B cell (primary cell): ENCODE measurements at regions of chr6 and their contacts with region 1.

Region 1: GRCh38 chr6:150685860-150686259 is 86.2 kb downstream of the PLEKHG1 start:
- DNase-seq: peak; percentile 73
- ATAC-seq: peak; percentile 44
- H3K4me3 ChIP-seq: no peak overlapping the region
- H3K4me3 Mint-ChIP-seq: no peak overlapping the region
- H3K27ac ChIP-seq: peak overlapping the region; percentile 72 to 96
- H3K27ac Mint-ChIP-seq: peak overlapping the region; percentile 46
- H3K4me1 ChIP-seq: peaks cover 89 to 98% of the 10 kb centered on the region in 2 donors
- H3K4me1 Mint-ChIP-seq: peaks cover 93% of the 10 kb centered on the region
- H3K27me3 ChIP-seq: no peaks in the 10 kb centered on the region
- H3K27me3 Mint-ChIP-seq: no peaks in the 10 kb centered on the region
- CTCF ChIP-seq: peak; percentile 75

Region 2: GRCh38 chr6:150037526-150038201 is 648.2 kb before region 1 on chr6:
- CTCF ChIA-PET with region 1: no interaction called
- POLR2A ChIA-PET with region 1: no interaction called
- intact Hi-C with region 1: no loop called
- DNase-seq: peak; percentile 30
- ATAC-seq: no peak
- H3K4me3 ChIP-seq: peak overlapping the region in 3 of 5 experiments; percentile 14 to 40 (median 35)
- H3K4me3 Mint-ChIP-seq: peak overlapping the region; percentile 78
- H3K27ac ChIP-seq: no peak overlapping the region
- H3K27ac Mint-ChIP-seq: peak overlapping the region; percentile 1
- H3K4me1 ChIP-seq: peaks cover 18% of the 10 kb centered on the region in 2 donors
- H3K4me1 Mint-ChIP-seq: peaks cover 12% of the 10 kb centered on the region
- H3K27me3 ChIP-seq: peaks cover 0 to 65% (median 41%) of the 10 kb centered on the region in 4 experiments
- H3K27me3 Mint-ChIP-seq: peaks cover 85% of the 10 kb centered on the region
- CTCF ChIP-seq: no peak

Region 3: GRCh38 chr6:150622941-150623874 is 62.7 kb before region 1 on chr6:
- CTCF ChIA-PET with region 1: interaction called, 3 read pairs
- POLR2A ChIA-PET with region 1: no interaction called
- intact Hi-C with region 1: loop called (anchors 2 kb)
- DNase-seq: peak; percentile 95
- ATAC-seq: peak; percentile 85
- H3K4me3 ChIP-seq: peak overlapping the region in 2 of 5 experiments; percentile 18 to 37
- H3K4me3 Mint-ChIP-seq: peak overlapping the region; percentile 9
- H3K27ac ChIP-seq: peak overlapping the region; percentile 96
- H3K27ac Mint-ChIP-seq: peak overlapping the region; percentile 94
- H3K4me1 ChIP-seq: peaks cover 93 to 94% of the 10 kb centered on the region in 2 donors
- H3K4me1 Mint-ChIP-seq: peaks cover 90% of the 10 kb centered on the region
- H3K27me3 ChIP-seq: no peaks in the 10 kb centered on the region
- H3K27me3 Mint-ChIP-seq: no peaks in the 10 kb centered on the region
- CTCF ChIP-seq: no peak

Region 4: DNA sequence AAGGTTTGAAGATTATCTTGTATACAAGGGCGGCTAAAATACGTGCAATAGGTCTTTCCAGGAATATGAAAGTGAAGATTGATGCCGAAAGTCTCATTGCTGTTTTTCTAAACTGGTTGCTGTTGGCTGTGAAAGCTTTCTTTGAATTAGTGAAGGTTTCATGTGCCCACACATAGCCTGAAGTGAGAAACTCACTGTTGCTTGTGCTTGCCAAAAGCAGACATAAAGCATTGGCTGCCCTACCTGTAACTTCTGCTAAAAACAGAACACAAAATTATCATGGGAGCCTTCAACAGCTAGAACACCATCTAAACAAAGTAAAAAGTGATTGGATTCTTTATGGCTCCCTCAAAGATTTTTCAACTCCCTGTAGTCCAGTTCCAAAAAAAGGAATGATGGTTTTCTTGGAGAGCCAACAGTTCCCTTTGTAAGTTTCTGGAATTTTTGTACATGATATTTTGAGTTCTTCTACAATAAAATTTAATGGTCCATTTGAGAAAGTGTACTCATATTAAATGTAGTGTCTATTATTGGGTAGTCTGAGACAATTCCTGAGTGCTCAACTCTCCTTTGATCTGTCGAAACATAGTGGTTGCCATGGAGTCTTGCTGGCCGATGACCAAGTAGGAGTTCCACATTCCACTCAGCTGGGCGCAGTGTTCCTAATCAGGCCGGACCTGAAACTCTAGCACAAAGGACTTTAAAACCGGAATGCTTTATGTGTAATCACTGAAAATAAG is 17.7 kb before region 1 on chr6:
- CTCF ChIA-PET with region 1: interaction called, 5 read pairs
- POLR2A ChIA-PET with region 1: no interaction called
- intact Hi-C with region 1: loop called (anchors 1 kb)
- DNase-seq: no peak
- ATAC-seq: no peak
- H3K4me3 ChIP-seq: no peak overlapping the region
- H3K4me3 Mint-ChIP-seq: no peak overlapping the region
- H3K27ac ChIP-seq: peak overlapping the region in 1 of 2 donors; percentile 72
- H3K27ac Mint-ChIP-seq: peak overlapping the region; percentile 27
- H3K4me1 ChIP-seq: peaks cover 6 to 26% of the 10 kb centered on the region in 2 donors
- H3K4me1 Mint-ChIP-seq: peaks cover 57% of the 10 kb centered on the region
- H3K27me3 ChIP-seq: no peaks in the 10 kb centered on the region
- H3K27me3 Mint-ChIP-seq: no peaks in the 10 kb centered on the region
- CTCF ChIP-seq: no peak

Region 5: DNA sequence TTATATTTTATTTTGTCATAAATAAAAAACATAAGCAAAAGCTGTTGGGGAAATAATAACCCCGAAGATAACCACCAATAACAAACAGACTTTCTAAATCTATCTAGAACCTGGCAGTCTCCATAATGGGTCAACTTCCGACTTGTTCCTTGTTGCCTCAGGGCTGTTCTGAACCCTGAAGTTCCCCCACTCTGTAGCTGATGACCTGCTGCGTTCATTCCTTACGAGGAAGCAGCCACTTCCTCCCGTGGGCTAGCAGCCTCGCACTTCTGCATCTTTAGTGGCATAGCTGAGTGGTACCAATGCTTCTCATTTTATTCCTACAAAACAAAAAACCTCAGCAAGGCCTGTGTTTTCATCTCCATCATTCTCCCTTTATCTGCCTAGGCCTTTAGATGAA is 16.8 kb after region 1 on chr6:
- CTCF ChIA-PET with region 1: interaction called, 18 read pairs
- POLR2A ChIA-PET with region 1: no interaction called
- intact Hi-C with region 1: loop called (anchors 2 kb)
- DNase-seq: peak; percentile 76
- ATAC-seq: peak; percentile 81
- H3K4me3 ChIP-seq: no peak overlapping the region
- H3K4me3 Mint-ChIP-seq: peak overlapping the region; percentile 65
- H3K27ac ChIP-seq: peak overlapping the region; percentile 65 to 80
- H3K27ac Mint-ChIP-seq: peak overlapping the region; percentile 79
- H3K4me1 ChIP-seq: peaks cover 78 to 88% of the 10 kb centered on the region in 2 donors
- H3K4me1 Mint-ChIP-seq: peaks cover 83% of the 10 kb centered on the region
- H3K27me3 ChIP-seq: no peaks in the 10 kb centered on the region
- H3K27me3 Mint-ChIP-seq: no peaks in the 10 kb centered on the region
- CTCF ChIP-seq: no peak

Region 6: DNA sequence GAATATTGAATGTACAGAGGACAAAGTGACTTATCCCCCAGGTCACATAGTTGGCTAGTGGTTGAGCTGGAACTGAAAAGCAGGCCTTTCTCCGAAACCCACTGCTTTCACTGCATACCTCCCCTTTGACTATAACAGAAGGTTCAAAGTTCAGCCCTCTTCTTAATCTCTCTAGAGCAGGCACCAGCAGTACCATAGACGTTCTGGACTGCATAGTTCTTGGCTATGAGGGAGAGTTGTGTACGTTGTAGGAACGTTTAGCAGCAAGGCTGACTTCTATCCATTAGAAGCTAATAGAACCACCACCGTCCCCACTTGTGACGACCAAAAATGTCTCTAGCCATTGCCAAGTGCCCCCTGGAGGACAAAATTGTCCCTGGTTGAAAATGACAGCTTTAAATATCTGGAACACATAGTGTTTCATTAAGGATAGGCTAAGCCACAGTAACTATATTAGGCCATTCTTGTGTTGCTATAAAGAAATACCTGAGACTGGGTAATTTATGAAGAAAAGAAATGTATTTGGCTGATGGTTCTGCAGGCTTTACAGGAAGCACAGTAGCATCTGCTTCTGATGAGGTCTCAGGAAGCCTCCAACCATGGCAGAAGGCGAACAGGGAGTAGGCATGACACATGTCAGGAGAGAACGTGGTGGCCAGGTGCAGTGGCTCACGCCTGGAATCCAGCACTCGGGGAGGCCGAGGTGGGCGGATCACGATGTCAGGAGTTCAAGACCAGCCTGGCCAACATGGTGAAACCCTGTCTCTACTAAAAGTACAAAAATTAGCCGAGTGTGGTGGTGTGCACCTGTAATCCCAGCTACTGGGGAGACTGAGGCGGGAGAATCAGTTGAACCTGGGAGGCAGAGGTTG is 56.0 kb after region 1 on chr6:
- CTCF ChIA-PET with region 1: interaction called, 13 read pairs
- POLR2A ChIA-PET with region 1: no interaction called
- intact Hi-C with region 1: loop called (anchors 2 kb)
- DNase-seq: peak; percentile 77
- ATAC-seq: peak; percentile 33
- H3K4me3 ChIP-seq: no peak overlapping the region
- H3K4me3 Mint-ChIP-seq: no peak overlapping the region
- H3K27ac ChIP-seq: peak overlapping the region in 1 of 2 donors; percentile 31
- H3K27ac Mint-ChIP-seq: peak overlapping the region; percentile 27
- H3K4me1 ChIP-seq: peaks cover 13 to 17% of the 10 kb centered on the region in 2 donors
- H3K4me1 Mint-ChIP-seq: peaks cover 67% of the 10 kb centered on the region
- H3K27me3 ChIP-seq: no peaks in the 10 kb centered on the region
- H3K27me3 Mint-ChIP-seq: no peaks in the 10 kb centered on the region
- CTCF ChIP-seq: peak; percentile 82

Region 7: DNA sequence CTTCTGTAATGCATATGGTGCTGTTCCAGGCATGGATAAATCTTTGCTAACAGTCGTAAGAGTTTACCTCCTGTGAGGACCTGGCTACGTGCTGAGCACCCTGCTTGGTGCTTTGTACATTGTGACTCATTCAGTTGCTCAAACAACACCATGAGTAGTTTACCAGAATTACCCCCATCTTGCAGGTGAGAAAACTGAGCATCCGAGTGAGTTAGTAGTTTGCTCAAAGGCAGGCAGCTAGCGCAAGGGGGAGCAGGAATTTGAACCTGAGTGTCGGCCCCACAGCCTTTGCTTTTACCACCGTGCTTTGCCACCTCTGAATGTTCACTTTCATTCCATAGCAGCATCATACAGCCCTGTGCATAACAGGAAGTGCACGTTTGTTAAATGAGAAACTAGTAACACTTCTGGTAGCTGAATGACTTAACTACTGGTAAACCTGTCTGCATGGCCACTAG is 301.5 kb after region 1 on chr6:
- CTCF ChIA-PET with region 1: no interaction called
- POLR2A ChIA-PET with region 1: no interaction called
- intact Hi-C with region 1: no loop called
- DNase-seq: no peak
- ATAC-seq: no peak
- H3K4me3 ChIP-seq: no peak overlapping the region
- H3K4me3 Mint-ChIP-seq: no peak overlapping the region
- H3K27ac ChIP-seq: no peak overlapping the region
- H3K27ac Mint-ChIP-seq: no peak overlapping the region
- H3K4me1 ChIP-seq: no peaks in the 10 kb centered on the region
- H3K4me1 Mint-ChIP-seq: peaks cover 3% of the 10 kb centered on the region
- H3K27me3 ChIP-seq: no peaks in the 10 kb centered on the region
- H3K27me3 Mint-ChIP-seq: no peaks in the 10 kb centered on the region
- CTCF ChIP-seq: no peak